AG04449 (cell line): ENCODE measurements at regions of chr10 and their contacts with region 1.

Region 1: GRCh38 chr10:80498833-80499741 is 38.6 kb upstream of the SH2D4B start:
- DNase-seq: peak; percentile 91
- H3K4me3 ChIP-seq: no peak overlapping the region
- CTCF ChIP-seq: no peak

Region 2: DNA sequence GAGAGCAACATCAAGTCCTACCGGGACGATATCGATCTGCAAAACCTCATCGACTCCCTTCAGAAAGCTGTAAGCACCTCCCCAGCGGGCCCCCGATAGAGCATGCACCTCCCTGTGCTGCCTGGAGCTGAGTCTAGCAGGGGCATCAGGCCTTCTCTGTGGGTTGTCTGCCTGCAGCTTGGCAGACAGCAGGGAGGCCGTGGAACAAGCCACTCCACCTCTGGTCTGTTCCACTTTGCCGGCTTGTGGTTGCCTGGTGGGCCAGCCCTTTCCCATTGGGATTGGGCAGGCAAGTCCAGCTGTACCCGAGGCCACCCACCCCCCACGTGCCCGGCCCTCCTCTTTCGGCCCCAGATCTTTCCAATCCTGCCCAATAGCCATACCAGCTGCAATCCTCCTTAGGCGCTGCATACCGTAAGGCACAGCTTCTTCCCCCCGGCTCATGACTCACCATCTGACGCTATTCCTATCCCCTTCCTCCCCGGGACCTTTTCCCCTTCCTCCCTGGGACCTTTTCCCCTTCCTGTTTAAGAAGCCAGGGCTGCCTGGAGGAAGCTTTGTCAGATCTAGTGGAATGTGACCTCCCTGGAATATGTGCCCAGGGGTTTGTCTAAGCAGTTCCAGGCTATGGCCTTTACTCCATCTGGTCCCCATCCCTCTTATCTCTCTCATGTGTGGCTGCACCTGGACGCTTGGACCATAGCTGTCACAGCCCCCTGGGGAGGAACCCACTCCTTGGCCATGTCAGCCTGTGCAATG is 10.5 kb after region 1 on chr10:
- CTCF ChIA-PET with region 1: interaction called, 70 read pairs
- POLR2A ChIA-PET with region 1: interaction called, 4 read pairs
- DNase-seq: peak; percentile 28
- H3K4me3 ChIP-seq: no peak overlapping the region
- CTCF ChIP-seq: no peak